CD14-positive monocyte (primary cell): ENCODE measurements at regions of chr3 and their contacts with region 1.

Region 1: DNA sequence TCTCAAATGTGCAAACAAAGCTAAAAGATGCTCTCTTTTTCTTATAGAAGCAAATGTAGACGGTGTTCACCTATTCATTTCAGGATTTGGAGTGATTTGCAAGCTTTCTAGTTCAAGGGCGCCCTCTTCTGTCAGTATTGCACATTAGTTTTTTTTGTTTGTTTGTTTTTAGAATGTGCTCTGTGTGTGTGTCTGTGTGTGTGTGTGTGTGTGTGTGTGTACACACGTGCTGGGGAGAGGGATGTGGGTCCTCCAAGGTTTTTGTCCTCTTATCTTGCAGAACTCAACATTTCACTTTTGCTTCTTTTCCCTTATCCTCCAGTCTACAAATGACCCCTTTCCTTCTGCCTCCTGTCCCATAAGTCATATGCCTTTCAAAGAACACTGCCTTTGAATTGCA is 23.5 kb downstream of the DNAH1 start:
- DNase-seq: peak; percentile 59 to 65 (median 61)
- H3K4me3 ChIP-seq: no peak overlapping the region
- H3K4me3 Mint-ChIP-seq: no peak overlapping the region
- H3K27ac ChIP-seq: no peak overlapping the region
- H3K27ac Mint-ChIP-seq: peak overlapping the region in 2 of 7 donors; percentile 6 to 35
- H3K4me1 ChIP-seq: peaks cover 25 to 27% of the 10 kb centered on the region in 2 donors
- H3K4me1 Mint-ChIP-seq: peaks cover 24% of the 10 kb centered on the region
- H3K27me3 ChIP-seq: no peaks in the 10 kb centered on the region
- H3K27me3 Mint-ChIP-seq: peaks cover 0 to 2% (median 0%) of the 10 kb centered on the region in 3 donors
- CTCF ChIP-seq: peak; percentile 79

Region 2: DNA sequence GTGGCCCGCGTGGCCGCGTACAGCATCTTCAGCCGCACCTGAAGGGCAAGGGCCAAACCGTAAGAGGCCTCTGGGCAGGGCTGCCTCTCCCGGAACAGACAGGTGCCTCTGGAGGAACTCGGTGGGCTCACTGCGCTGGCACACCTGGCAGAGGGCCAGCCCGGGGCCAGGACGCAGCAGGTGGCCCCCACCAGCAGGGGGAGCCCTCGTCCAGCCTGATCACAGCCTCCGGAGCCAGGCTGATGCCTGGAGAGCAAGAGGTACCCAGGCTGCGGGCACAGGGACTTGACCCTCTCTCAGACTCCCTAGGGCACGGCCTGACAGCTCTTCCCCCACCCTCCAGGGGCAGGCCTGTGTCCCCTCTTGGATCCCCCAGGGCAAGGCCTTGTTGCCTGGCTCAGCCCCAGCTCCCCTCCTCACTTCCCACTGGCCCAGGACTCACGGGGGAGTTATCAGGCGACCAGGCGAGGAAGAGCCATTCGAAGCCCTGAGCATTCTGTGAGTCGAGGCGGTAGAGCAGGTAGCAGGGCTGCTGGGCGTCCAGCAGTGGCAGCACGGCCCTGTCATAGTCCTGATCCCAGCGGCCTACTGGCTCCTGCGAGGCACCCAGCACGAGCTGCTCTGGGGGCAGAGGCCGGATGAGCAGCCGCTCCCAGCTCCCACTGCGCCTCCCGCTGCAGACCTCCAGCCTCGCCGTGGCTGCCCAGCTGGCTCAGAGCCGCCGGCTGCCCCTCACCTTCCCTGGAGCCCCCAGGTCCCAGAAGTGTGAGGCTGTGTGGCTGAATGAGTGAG is 107.9 kb before region 1 on chr3:
- intact Hi-C with region 1: loop called (anchors 2 kb)
- DNase-seq: peak; percentile 75 to 80 (median 79)
- H3K4me3 ChIP-seq: no peak overlapping the region
- H3K4me3 Mint-ChIP-seq: peak overlapping the region in 1 of 2 donors; percentile 53
- H3K27ac ChIP-seq: peak overlapping the region in 1 of 2 donors; percentile 36
- H3K27ac Mint-ChIP-seq: peak overlapping the region in 6 of 7 donors; percentile 69 to 91 (median 74)
- H3K4me1 ChIP-seq: peaks cover 16 to 47% of the 10 kb centered on the region in 2 donors
- H3K4me1 Mint-ChIP-seq: peaks cover 34% of the 10 kb centered on the region
- H3K27me3 ChIP-seq: no peaks in the 10 kb centered on the region
- H3K27me3 Mint-ChIP-seq: no peaks in the 10 kb centered on the region
- CTCF ChIP-seq: peak; percentile 98

Region 3: GRCh38 chr3:52291508-52292181 is 48.0 kb before region 1 on chr3:
- intact Hi-C with region 1: loop called (anchors 2 to 5 kb)
- DNase-seq: peak in 2 of 3 donors; percentile 39 to 41
- H3K4me3 ChIP-seq: no peak overlapping the region
- H3K4me3 Mint-ChIP-seq: no peak overlapping the region
- H3K27ac ChIP-seq: peak overlapping the region in 1 of 2 donors; percentile 20
- H3K27ac Mint-ChIP-seq: peak overlapping the region in 4 of 7 donors; percentile 30 to 81 (median 55)
- H3K4me1 ChIP-seq: peaks cover 11 to 20% of the 10 kb centered on the region in 2 donors
- H3K4me1 Mint-ChIP-seq: peaks cover 17% of the 10 kb centered on the region
- H3K27me3 ChIP-seq: no peaks in the 10 kb centered on the region
- H3K27me3 Mint-ChIP-seq: peaks cover 0 to 3% (median 0%) of the 10 kb centered on the region in 3 donors
- CTCF ChIP-seq: peak; percentile 71